Thyroid gland (tissue), 4 donors: ENCODE measurements at regions of chr11 and their contacts with region 1.

Region 1: GRCh38 chr11:26649884-26650283 is 72.0 kb downstream of the SLC5A12 start:
- DNase-seq: peak; percentile 77 to 78
- H3K4me3 ChIP-seq: no peak overlapping the region
- H3K27ac ChIP-seq: no peak overlapping the region
- H3K4me1 ChIP-seq: no peaks in the 10 kb centered on the region
- H3K27me3 ChIP-seq: no peaks in the 10 kb centered on the region
- CTCF ChIP-seq: peak; percentile 30 to 79 (median 76)
- POLR2A ChIP-seq: no peak

Region 2: GRCh38 chr11:26297189-26297975 is 352.5 kb before region 1 on chr11:
- intact Hi-C with region 1: loop called (anchors 10 kb)
- DNase-seq: no peak
- H3K4me3 ChIP-seq: no peak overlapping the region
- H3K27ac ChIP-seq: no peak overlapping the region
- H3K4me1 ChIP-seq: no peaks in the 10 kb centered on the region
- H3K27me3 ChIP-seq: no peaks in the 10 kb centered on the region
- CTCF ChIP-seq: peak; percentile 28 to 84 (median 59)
- POLR2A ChIP-seq: no peak

Region 3: DNA sequence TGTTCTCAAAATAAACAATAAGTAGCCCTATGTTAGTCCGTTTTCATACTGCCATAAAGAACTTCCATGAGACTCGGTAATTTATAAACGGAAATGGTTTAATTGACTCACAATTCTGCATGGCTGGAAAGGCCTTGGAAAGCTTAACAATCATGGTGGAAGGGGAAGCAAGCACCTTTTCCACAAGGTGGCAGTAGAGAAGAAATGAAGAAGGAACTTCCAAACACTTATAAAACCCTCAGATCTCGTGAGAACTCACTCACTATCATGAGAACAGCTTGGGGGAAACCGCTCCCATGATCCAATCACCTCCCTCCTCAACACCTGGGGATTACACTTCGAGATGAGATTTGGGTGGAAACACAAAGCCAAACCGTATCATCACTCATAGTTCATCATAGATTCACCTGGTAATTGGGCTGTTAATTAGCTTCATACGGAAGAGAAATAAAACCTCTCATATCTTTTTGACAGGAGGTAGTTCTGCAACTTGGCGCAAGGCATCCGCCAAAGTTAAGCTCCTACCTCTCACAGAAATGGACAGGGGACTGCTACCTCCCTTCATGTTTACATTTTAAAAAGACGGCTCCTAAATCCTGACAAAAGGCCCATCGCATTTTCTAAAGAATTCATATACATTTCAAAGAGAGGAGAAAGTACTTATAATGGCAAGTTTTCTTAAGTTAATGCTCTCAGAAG is 126.8 kb before region 1 on chr11:
- intact Hi-C with region 1: loop called (anchors 10 kb)
- DNase-seq: peak in 1 of 2 donors; percentile 7
- H3K4me3 ChIP-seq: no peak overlapping the region
- H3K27ac ChIP-seq: no peak overlapping the region
- H3K4me1 ChIP-seq: no peaks in the 10 kb centered on the region
- H3K27me3 ChIP-seq: no peaks in the 10 kb centered on the region
- CTCF ChIP-seq: peak in 5 of 6 experiments; percentile 16 to 52 (median 38)
- POLR2A ChIP-seq: no peak

Region 4: DNA sequence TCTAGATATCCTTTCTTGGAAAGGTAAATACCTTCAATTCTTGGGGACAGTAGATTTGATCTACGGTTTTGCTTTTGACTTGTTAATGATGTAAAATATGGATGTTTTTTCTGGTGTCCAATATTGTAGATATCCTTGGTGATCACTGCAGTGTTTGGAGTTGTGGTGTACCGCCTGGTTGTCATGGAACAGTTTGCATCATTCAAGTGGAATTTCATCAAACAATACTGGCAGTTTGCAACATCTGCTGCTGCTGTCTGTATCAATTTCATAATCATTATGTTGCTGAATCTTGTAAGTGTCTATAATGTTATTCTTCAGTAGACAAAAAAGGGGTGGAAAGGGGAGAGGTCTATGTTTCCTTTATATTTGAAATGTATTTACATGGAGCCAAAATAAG is 50.5 kb before region 1 on chr11:
- intact Hi-C with region 1: no loop called
- DNase-seq: no peak
- H3K4me3 ChIP-seq: no peak overlapping the region
- H3K27ac ChIP-seq: no peak overlapping the region
- H3K4me1 ChIP-seq: no peaks in the 10 kb centered on the region
- H3K27me3 ChIP-seq: no peaks in the 10 kb centered on the region
- CTCF ChIP-seq: no peak
- POLR2A ChIP-seq: no peak

Region 5: DNA sequence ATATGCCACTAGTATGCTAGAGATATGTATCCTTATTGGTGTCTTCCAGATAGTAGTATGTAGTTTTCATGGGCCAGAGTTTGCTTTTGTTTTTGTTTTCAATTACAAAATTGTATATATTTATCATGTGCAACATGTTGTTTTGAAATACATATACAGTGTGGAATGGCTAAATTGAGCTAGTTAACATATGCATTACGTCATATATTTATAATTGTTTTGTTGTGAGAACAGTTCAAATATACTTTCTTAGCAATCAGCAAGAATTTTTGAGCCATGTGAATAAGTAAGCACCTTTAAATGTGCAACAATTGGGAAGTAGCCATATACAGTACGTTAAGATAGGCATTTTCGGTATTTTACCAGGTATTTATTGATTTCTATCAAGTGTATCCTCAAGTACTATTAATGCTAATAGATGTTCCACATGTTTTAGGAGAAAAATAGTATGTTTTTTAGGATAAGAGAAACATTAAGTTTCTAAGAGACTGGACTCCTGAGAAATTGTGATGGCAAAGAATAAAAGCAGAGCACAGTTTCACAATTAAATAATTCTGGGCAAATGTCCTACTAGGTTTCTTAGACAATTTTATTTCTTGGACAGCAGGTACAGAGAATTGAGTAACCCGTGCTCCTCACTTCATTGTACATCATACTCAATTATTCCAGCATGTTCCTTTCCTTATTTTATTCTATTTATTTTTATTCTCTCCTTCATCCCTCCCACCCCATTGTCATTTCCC is 132.5 kb after region 1 on chr11:
- intact Hi-C with region 1: no loop called
- DNase-seq: no peak
- H3K4me3 ChIP-seq: no peak overlapping the region
- H3K27ac ChIP-seq: no peak overlapping the region
- H3K4me1 ChIP-seq: peaks cover 10 to 12% of the 10 kb centered on the region in 2 donors
- H3K27me3 ChIP-seq: no peaks in the 10 kb centered on the region
- CTCF ChIP-seq: no peak
- POLR2A ChIP-seq: no peak